AG04449 (cell line): ENCODE measurements at regions of chr15 and their contacts with region 1.

Region 1: GRCh38 chr15:56052395-56053045 is 59.1 kb upstream of the NEDD4 start:
- DNase-seq: no peak
- H3K4me3 ChIP-seq: no peak overlapping the region
- CTCF ChIP-seq: peak; percentile 55

Region 2: DNA sequence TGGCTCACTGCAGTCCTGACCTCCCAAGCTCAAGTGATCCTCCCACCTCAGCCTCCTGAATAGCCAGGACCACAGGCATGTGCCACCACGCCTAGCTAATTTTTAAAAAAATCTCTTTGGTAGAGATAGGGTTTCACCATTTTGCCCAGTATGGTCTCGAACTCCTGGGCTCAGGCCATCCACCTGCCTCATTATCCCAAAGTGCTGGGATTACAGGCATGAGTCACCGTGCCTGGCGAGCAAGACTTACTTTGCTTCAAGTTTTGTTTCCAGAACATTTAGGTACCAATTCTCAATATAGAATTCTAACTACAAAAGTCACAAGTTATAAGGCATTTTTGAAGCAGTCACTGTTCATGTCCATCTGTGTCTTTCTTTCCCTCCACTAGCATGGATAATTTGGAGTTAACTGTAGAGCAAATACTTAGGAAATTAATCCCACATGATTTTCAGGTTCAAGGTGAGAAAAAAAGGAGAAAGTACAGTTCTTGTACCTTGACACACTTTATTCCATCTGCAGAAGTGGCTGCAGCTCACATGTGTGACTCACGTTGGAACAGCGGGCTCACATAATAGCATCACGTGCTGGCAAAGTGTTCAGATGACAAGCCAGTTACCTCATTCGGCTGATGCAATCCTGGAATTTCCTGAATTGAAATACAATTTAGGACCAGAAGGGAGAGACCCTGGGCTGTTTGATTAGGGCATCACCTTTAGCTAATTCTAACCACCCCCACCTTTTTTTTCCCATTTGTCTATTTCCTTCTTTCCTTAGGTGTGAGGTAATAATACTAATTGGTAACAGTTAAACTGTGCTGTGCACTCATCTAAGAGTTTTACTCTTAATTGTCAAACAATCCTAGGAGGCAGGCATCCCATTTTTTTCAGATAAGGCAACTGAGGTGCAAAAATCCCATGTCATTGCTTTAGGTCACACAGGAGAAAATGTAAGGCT is 12.2 kb before region 1 on chr15:
- CTCF ChIA-PET with region 1: interaction called, 22 read pairs
- POLR2A ChIA-PET with region 1: no interaction called
- DNase-seq: peak; percentile 77
- H3K4me3 ChIP-seq: no peak overlapping the region
- CTCF ChIP-seq: no peak